CD8-positive, alpha-beta T cell (primary cell): ENCODE measurements at regions of chr1 and their contacts with region 1.

Region 1: DNA sequence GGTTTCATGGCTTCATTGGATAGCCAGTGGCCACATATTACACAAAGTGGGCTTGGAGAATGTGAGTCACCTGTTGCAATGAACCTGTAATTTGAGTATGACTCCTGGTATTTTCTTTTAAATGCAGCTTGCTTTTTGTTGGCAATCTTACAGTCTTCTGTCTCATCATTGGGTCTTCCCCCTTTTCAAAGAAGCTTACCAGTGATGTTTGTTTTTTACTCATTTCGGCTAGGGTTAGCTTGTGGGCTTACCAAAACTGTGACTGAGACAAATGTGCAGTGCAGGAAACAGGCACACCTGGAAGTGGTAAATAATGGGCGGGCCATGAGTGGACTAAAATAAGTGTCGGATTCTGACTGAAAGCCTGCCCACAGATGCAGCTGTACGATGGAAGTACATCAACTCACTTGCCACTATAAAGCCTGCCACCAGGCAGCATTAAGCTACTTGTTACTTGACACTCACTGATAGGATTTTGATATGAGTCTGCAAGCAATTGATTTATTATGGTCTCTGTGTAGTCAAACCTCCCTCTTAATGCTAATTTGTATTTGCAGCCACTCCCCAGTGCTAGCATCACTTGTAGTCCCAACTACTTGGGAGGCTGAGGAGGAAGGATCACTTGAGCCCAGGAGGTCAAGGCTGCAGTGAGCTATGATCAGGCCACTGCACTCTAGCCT is 4.2 kb downstream of the HHAT start:
- DNase-seq: peak in 7 of 9 experiments; percentile 8 to 78 (median 60)
- ATAC-seq: peak; percentile 68
- H3K4me3 ChIP-seq: no peak overlapping the region
- H3K4me3 Mint-ChIP-seq: peak overlapping the region; percentile 26
- H3K27ac ChIP-seq: peak overlapping the region; percentile 38 to 70
- H3K27ac Mint-ChIP-seq: peak overlapping the region; percentile 86
- H3K4me1 ChIP-seq: peaks cover 11% of the 10 kb centered on the region
- H3K4me1 Mint-ChIP-seq: peaks cover 36% of the 10 kb centered on the region
- H3K27me3 ChIP-seq: no peaks in the 10 kb centered on the region
- H3K27me3 Mint-ChIP-seq: no peaks in the 10 kb centered on the region
- CTCF ChIP-seq: no peak

Region 2: DNA sequence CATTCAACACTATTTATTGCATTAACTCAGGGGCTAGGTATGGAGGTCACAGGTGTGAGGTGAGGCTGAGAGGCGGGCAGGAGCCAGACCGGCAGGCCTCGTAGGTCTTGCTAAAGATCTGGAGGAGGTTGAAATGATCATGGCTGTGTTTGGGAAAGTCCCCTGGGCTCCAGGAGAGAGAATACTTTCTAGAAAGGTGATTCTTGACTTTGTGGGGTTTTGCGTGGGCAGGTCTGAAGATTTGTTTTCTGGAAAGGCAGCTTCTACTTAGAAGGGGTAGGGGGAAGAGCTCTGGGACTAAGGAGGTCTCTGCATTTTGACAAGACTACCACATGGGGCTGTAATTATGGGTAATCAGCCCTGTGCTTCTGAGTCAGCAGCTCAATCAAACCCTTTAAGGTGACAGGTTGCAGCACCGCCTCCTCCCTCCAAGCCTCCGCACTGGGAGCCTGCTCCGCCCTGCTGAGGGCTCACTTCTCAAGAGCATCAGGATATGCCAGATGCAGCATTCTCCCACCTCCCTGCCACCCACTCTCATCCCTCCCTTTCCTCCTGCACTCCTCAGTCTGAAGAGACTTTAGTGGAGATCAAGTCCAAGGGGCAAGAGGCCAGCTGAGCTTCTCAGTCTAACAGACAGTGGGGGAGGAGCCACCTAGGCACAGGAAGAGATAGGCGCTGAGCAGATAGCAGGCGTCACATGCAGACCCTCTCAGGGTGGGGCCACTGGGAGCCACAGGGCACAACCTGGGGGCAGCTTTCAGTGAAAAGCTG is 1215.6 kb after region 1 on chr1:
- CTCF ChIA-PET with region 1: no interaction called
- POLR2A ChIA-PET with region 1: no interaction called
- intact Hi-C with region 1: loop called in 1 of 2 experiments (anchors 5 kb)
- DNase-seq: no peak
- ATAC-seq: no peak
- H3K4me3 ChIP-seq: no peak overlapping the region
- H3K4me3 Mint-ChIP-seq: no peak overlapping the region
- H3K27ac ChIP-seq: no peak overlapping the region
- H3K27ac Mint-ChIP-seq: no peak overlapping the region
- H3K4me1 ChIP-seq: no peaks in the 10 kb centered on the region
- H3K4me1 Mint-ChIP-seq: no peaks in the 10 kb centered on the region
- H3K27me3 ChIP-seq: no peaks in the 10 kb centered on the region
- H3K27me3 Mint-ChIP-seq: peaks cover 6% of the 10 kb centered on the region
- CTCF ChIP-seq: no peak